ENCODE measurements at regions of chr7 and their contacts with region 1.

Region 1: GRCh38 chr7:85030893-85031292 is 156.0 kb downstream of the SEMA3D start:
- DNase-seq: no peak
- H3K4me3 Mint-ChIP-seq: no peak overlapping the region
- H3K27ac Mint-ChIP-seq: no peak overlapping the region
- H3K4me1 Mint-ChIP-seq: no peaks in the 10 kb centered on the region
- H3K27me3 Mint-ChIP-seq: no peaks in the 10 kb centered on the region

Region 2: GRCh38 chr7:83936056-83936708 is 1094.7 kb before region 1 on chr7:
- intact Hi-C with region 1: loop called (anchors 1 kb)
- DNase-seq: peak; percentile 2
- H3K4me3 Mint-ChIP-seq: no peak overlapping the region
- H3K27ac Mint-ChIP-seq: no peak overlapping the region
- H3K4me1 Mint-ChIP-seq: no peaks in the 10 kb centered on the region
- H3K27me3 Mint-ChIP-seq: peaks cover 5% of the 10 kb centered on the region

Region 3: DNA sequence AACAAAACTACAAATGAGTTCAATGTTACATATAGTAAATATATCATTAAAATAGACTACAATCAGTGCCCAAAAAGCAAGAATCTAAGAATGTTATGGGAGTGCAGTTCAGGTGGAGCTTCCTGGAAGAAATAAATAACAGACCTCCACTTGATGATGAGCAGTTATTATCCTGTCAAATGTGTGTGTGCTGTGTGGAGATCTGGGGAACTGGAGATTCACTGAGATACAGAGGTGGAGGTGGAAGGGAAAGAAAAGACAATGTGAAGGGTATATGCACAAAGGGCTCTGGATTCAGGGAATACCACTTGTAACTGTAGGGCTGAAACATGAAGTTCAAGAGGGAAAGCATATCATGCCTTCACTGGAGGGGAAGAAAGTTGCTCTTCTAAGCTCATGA is 175.1 kb before region 1 on chr7:
- intact Hi-C with region 1: no loop called
- DNase-seq: no peak
- H3K4me3 Mint-ChIP-seq: no peak overlapping the region
- H3K27ac Mint-ChIP-seq: no peak overlapping the region
- H3K4me1 Mint-ChIP-seq: no peaks in the 10 kb centered on the region
- H3K27me3 Mint-ChIP-seq: no peaks in the 10 kb centered on the region

Region 4: GRCh38 chr7:85186521-85187241 is 155.8 kb after region 1 on chr7 and contains the start of gene SEMA3D:
- intact Hi-C with region 1: loop called (anchors 5 kb)
- DNase-seq: peak; percentile 2
- H3K4me3 Mint-ChIP-seq: no peak within 1 kb of the TSS
- H3K27ac Mint-ChIP-seq: peak within 1 kb of the TSS; percentile 23
- H3K4me1 Mint-ChIP-seq: no peaks in the 10 kb centered on the region
- H3K27me3 Mint-ChIP-seq: peaks cover 31% of the 10 kb centered on the region
- total RNA-seq, gene SEMA3D: 0.60 and 0.64 TPM in 2 replicates

Region 5: DNA sequence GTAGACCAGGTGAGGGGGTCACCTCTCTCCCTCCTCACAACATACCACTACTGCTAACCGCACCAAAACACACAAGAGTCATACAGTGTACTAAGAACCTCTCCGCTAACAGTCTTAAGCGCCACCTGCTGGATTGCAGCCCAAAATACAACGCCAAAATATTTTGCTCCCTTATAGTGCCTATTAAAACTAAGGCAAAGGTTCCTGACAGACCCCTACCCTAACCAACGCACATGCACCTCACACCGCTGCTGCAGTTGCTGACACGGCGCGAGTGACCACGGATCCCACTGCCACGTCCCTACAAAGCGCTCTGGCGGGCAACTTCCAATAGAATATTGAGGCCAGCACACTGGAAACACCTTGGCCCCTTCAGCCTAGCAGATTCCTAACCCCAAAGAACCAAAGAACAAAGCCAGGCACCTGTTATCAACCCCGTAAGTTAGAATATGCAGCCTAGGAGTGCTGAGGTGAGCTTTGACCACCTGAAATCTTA is 719.6 kb after region 1 on chr7:
- intact Hi-C with region 1: loop called (anchors 2 kb)
- DNase-seq: no peak
- H3K4me3 Mint-ChIP-seq: no peak overlapping the region
- H3K27ac Mint-ChIP-seq: no peak overlapping the region
- H3K4me1 Mint-ChIP-seq: no peaks in the 10 kb centered on the region
- H3K27me3 Mint-ChIP-seq: no peaks in the 10 kb centered on the region

Region 6: GRCh38 chr7:86469680-86470295 is 1438.9 kb after region 1 on chr7:
- intact Hi-C with region 1: loop called (anchors 2 kb)
- DNase-seq: peak; percentile 23
- H3K4me3 Mint-ChIP-seq: no peak overlapping the region
- H3K27ac Mint-ChIP-seq: no peak overlapping the region
- H3K4me1 Mint-ChIP-seq: no peaks in the 10 kb centered on the region
- H3K27me3 Mint-ChIP-seq: no peaks in the 10 kb centered on the region